GM12878 (cell line): ENCODE measurements at regions of chr22 and their contacts with region 1.

Region 1: DNA sequence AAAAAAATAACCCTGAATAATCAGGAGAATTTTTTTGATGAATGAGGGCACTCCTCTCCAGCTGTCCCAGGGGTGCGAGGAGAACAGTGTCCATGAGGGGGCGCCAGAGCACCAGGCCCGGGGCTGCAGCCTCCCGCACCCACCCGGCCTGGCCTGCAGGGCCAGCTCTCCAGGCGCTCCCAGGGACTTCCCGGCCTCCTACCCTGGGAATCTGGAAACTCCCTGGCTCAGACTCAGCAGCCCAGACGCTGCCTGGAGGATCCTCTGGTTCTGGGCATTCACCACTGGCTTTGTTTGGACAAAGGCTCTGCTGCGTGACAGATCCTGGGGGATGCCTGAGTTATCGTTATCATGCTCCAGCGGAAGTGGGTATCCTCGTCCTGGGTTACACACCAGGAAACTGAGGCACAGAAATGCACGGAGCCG is 31.0 kb downstream of the MCM5 start:
- DNase-seq: no peak
- ATAC-seq: peak; percentile 79
- H3K4me3 ChIP-seq: no peak overlapping the region
- H3K27ac ChIP-seq: no peak overlapping the region
- H3K4me1 ChIP-seq: no peaks in the 10 kb centered on the region
- H3K27me3 ChIP-seq: no peaks in the 10 kb centered on the region
- CTCF ChIP-seq: peak; percentile 60 to 73 (median 69)
- EP300 ChIP-seq: no peak
- POLR2A ChIP-seq: no peak
- RAD21 ChIP-seq: peak; percentile 55

Region 2: GRCh38 chr22:35582861-35583670 is 152.2 kb after region 1 on chr22:
- CTCF ChIA-PET with region 1: interaction called, 9 read pairs
- POLR2A ChIA-PET with region 1: no interaction called
- RAD21 ChIA-PET with region 1: interaction called, 4 read pairs
- SMC1A ChIA-PET with region 1: interaction called, 3 read pairs
- in situ Hi-C with region 1: no loop called
- intact Hi-C with region 1: loop called (anchors 5 kb)
- DNase-seq: peak; percentile 7
- ATAC-seq: peak; percentile 93
- H3K4me3 ChIP-seq: no peak overlapping the region
- H3K27ac ChIP-seq: no peak overlapping the region
- H3K4me1 ChIP-seq: no peaks in the 10 kb centered on the region
- H3K27me3 ChIP-seq: no peaks in the 10 kb centered on the region; a peak in 1 of 4 replicates
- CTCF ChIP-seq: peak; percentile 87 to 94 (median 89)
- EP300 ChIP-seq: no peak
- POLR2A ChIP-seq: no peak
- RAD21 ChIP-seq: peak; percentile 86